K562 (cell line): ENCODE measurements at regions of chr13 and their contacts with region 1.

Region 1: DNA sequence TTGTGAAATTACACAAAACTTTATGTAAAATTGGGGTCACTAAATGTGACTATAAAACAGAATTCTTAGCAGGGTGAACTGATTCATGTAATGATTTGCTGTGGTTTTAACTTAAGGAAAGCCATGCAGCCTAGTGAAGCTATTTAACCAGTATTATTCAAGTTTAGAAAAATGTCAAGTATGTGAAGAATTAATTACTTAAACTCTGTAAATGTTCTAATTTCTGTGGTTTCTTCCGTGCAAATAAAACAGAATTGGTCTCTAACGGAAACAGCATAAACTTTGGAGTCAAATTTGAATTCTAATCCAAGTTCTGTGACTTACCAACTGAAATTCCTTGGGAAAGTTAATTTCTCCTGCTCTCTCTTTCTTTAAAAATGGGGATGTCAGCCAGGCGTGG is 13.3 kb downstream of the CDC16 start:
- DNase-seq: no peak
- ATAC-seq: no peak
- H3K4me3 ChIP-seq: no peak overlapping the region
- H3K27ac ChIP-seq: no peak overlapping the region
- H3K4me1 ChIP-seq: peaks cover 4 to 8% of the 10 kb centered on the region in 2 experiments; a peak in 4 of 5 replicates
- H3K27me3 ChIP-seq: no peaks in the 10 kb centered on the region
- CTCF ChIP-seq: no peak
- EP300 ChIP-seq: no peak
- POLR2A ChIP-seq: no peak
- RAD21 ChIP-seq: no peak

Region 2: GRCh38 chr13:113110048-113110851 is 1137.8 kb before region 1 on chr13:
- CTCF ChIA-PET with region 1: no interaction called
- POLR2A ChIA-PET with region 1: no interaction called
- in situ Hi-C with region 1: no loop called
- intact Hi-C with region 1: no loop called
- DNase-seq: no peak
- ATAC-seq: no peak
- H3K4me3 ChIP-seq: no peak overlapping the region
- H3K27ac ChIP-seq: no peak overlapping the region
- H3K4me1 ChIP-seq: peaks cover 0 to 10% of the 10 kb centered on the region in 2 experiments; a peak in 2 of 5 replicates
- H3K27me3 ChIP-seq: peaks cover 2 to 9% of the 10 kb centered on the region in 2 experiments; a peak in 3 of 5 replicates
- CTCF ChIP-seq: no peak
- EP300 ChIP-seq: no peak
- POLR2A ChIP-seq: no peak
- RAD21 ChIP-seq: no peak

Region 3: GRCh38 chr13:113579686-113580085 is 668.3 kb before region 1 on chr13:
- CTCF ChIA-PET with region 1: no interaction called
- POLR2A ChIA-PET with region 1: no interaction called
- in situ Hi-C with region 1: no loop called
- intact Hi-C with region 1: no loop called
- DNase-seq: no peak
- ATAC-seq: no peak
- H3K4me3 ChIP-seq: no peak overlapping the region
- H3K27ac ChIP-seq: no peak overlapping the region
- H3K4me1 ChIP-seq: peaks cover 0 to 16% of the 10 kb centered on the region in 2 experiments; a peak in 2 of 5 replicates
- H3K27me3 ChIP-seq: no peaks in the 10 kb centered on the region; a peak in 1 of 5 replicates
- CTCF ChIP-seq: no peak
- EP300 ChIP-seq: no peak
- POLR2A ChIP-seq: no peak
- RAD21 ChIP-seq: no peak

Region 4: GRCh38 chr13:114279758-114280355 is 31.8 kb after region 1 on chr13:
- CTCF ChIA-PET with region 1: no interaction called
- POLR2A ChIA-PET with region 1: interaction called, 10 read pairs
- in situ Hi-C with region 1: no loop called
- intact Hi-C with region 1: no loop called
- DNase-seq: peak in 1 of 4 experiments; percentile 33
- ATAC-seq: no peak
- H3K4me3 ChIP-seq: no peak overlapping the region
- H3K27ac ChIP-seq: peak overlapping the region; percentile 99
- H3K4me1 ChIP-seq: peaks cover 31 to 35% of the 10 kb centered on the region in 2 experiments
- H3K27me3 ChIP-seq: no peaks in the 10 kb centered on the region
- CTCF ChIP-seq: no peak
- EP300 ChIP-seq: no peak
- POLR2A ChIP-seq: no peak
- RAD21 ChIP-seq: no peak